HepG2 (cell line): ENCODE measurements at regions of chr22 and their contacts with region 1.

Region 1: DNA sequence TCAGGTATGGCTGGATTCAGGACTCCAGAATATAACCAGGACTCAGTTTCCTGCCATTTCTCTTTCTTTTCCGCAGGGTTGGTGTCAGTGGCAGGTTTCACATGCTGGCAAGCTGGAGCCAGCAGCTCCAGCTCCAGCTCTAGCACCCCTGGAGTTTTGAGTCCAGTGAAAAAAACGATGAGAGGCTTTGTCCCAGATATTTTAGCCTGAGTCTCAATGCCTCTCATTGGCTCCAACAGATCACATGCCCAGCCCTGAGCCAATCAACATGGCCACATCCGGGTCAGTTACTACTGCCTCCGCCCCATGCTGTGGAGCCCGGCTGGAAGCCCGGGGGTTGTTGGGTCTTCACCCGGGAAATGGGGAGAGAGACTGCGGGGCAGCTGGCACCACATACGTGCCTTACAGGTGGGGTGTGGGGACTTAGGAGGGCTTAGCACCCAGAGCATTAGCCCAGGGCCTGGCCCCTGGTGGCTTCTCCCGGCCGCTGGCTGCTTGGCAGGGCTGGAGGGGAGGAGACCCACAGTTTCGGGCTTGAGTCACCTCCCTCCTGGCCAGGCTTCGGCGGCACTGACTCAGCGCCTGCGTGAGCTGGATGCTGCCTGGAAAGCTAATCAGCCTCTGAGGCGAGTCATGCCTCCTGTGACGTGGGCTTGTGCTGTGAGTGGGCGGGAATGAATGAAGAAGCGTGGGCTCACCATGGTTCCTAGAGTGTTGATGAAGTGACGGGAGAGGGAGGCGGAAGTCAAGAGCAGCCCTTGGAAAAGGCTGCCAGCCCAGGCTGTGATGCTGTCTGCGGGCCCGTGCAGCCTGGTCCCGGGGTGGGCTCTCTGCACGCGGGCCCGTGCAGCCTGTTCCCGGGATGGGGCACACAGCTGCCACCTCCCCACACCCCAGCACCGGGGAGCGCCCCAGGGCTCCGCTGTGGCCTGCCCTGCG is 15.3 kb upstream of the MRTFA start:
- DNase-seq: peak; percentile 95
- ATAC-seq: peak; percentile 96
- H3K4me3 ChIP-seq: peak overlapping the region; percentile 68 to 90 (median 74)
- H3K27ac ChIP-seq: peak overlapping the region; percentile 87
- H3K4me1 ChIP-seq: peaks cover 45% of the 10 kb centered on the region
- H3K27me3 ChIP-seq: no peaks in the 10 kb centered on the region; a peak in 1 of 5 replicates
- CTCF ChIP-seq: no peak
- EP300 ChIP-seq: no peak
- POLR2A ChIP-seq: peak; percentile 85 to 91
- RAD21 ChIP-seq: 0 out of 2 replicates have a peak, but pooled peaks have one; percentile 6

Region 2: DNA sequence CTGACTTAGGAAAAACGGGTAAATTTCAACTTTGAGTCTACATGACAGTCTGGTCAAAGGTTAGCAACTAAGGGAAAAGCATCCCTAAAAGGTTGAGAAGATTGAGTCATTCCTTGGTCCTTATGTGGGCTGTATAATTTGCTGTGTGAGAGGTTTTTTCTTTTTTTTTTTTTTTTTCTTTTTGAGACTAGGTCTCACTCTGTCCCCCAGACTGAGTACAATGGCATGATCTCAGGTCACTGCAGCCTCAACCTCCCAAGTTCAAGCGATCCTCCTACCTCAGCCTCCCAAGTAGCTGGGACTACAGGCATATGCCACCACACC is 116.7 kb before region 1 on chr22:
- CTCF ChIA-PET with region 1: no interaction called
- POLR2A ChIA-PET with region 1: no interaction called
- in situ Hi-C with region 1: no loop called
- intact Hi-C with region 1: no loop called
- DNase-seq: no peak
- ATAC-seq: no peak
- H3K4me3 ChIP-seq: no peak overlapping the region
- H3K27ac ChIP-seq: no peak overlapping the region
- H3K4me1 ChIP-seq: peaks cover 30% of the 10 kb centered on the region
- H3K27me3 ChIP-seq: no peaks in the 10 kb centered on the region
- CTCF ChIP-seq: no peak
- EP300 ChIP-seq: no peak
- POLR2A ChIP-seq: no peak
- RAD21 ChIP-seq: no peak

Region 3: DNA sequence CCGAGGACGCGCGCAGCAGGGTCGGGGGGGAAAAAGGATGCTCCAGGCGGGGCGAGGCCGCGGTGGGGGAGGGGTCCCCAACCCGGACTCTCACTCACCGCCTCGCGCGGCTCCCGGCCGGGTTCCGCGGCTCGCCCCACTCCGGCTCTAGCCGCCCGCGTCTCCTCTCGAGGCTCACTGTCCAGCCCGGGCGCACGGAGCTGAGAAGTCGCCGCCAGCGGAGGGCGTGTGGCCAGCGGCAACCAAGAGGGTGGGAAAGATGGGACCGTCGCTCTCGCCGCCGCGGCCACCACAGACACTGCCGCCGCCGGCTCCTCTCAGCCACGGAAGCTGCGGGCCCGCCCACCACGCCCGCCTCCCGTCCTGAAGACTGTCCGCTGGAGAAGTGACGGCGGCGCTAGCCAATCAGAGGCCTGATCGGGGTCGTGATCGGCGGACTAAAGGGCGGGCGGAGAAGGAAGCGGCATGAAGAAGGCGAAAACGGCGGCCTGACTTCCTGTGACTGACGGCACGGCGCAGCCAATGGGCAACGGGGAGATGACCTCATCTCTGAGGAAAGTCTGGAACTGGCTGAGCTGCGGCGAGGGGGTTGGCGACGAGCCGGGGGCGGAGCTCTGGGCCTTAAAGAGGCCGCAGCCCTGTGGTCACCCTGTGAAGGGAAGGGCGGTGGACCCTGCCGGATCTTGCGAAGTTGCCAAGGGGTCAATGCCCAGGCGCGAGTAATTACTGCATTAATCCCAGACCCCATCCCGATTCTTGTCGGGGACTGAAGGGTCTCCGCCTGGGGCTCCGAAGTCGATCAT is 15.3 kb before region 1 on chr22 and contains the start of gene MRTFA:
- CTCF ChIA-PET with region 1: no interaction called
- POLR2A ChIA-PET with region 1: interaction called, 28 read pairs
- in situ Hi-C with region 1: no loop called
- intact Hi-C with region 1: no loop called
- DNase-seq: peak; percentile 98
- ATAC-seq: peak; percentile 95
- H3K4me3 ChIP-seq: peak within 1 kb of the TSS; percentile 98 to 100 (median 99)
- H3K27ac ChIP-seq: peak within 1 kb of the TSS; percentile 82
- H3K4me1 ChIP-seq: peaks cover 45% of the 10 kb centered on the region
- H3K27me3 ChIP-seq: no peaks in the 10 kb centered on the region; a peak in 1 of 5 replicates
- CTCF ChIP-seq: no peak; the same call in 1 of the 2 replicates
- EP300 ChIP-seq: no peak
- POLR2A ChIP-seq: peak; percentile 82 to 84
- RAD21 ChIP-seq: peak; percentile 69; the same call in 1 of the 2 replicates
- total RNA-seq, gene MRTFA: 8.2 and 9.9 TPM in 2 replicates